ENCODE measurements at regions of chr1 and their contacts with region 1.

Region 1: DNA sequence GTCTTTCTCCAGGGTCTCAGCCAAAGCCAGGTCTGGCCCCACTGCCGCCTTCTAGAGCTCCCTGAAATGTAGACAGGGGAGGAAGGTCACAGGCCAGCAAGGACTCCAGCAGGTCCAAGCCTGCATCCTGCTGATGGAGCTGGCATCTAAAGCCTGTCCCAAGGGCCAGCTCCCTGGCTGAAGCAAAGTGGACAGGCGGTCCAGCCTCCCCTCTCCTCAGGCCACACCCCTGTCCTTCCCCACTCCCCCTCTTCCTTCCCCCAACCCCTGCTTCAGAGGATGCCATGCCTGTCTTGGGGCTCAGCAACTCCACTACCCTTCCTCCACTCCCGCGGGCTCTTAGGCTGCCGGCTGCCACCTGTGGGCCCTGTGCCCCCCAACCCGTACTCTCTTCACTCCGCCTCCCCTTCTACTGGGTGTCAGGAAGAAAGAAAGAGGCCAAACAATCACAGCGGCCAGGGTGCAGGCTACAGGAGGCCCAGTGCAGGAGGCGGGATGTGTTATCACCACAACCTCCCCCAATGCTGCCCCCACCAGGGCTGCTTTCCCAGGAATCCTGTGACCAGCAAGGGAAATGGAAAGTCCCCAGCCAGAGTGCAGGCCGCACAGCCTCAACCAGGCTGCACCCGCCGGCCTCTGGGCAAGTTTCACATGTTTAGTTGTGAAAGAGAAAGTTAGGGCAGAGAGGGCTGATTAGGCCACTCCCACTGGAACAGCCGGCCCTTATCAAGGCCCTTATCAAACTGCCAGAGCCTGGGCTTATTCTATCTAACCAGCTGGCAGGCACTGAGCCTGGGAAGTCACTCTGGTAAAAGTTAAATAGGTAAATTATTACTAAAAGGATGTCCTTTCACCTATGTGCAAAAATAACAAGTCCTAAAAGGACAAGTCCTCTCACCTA is 34.1 kb downstream of the ACOT7 start:
- DNase-seq: peak; percentile 51 to 75 (median 66)
- ATAC-seq: peak; percentile 29 to 83 (median 71)
- H3K4me3 ChIP-seq: peak overlapping the region in 4 of 12 donors; percentile 4 to 26 (median 13)
- H3K27ac ChIP-seq: peak overlapping the region; percentile 52 to 89 (median 76)
- H3K4me1 ChIP-seq: peaks cover 6 to 36% (median 30%) of the 10 kb centered on the region in 12 donors
- H3K27me3 ChIP-seq: no peaks in the 10 kb centered on the region
- CTCF ChIP-seq: no peak
- POLR2A ChIP-seq: no peak

Region 2: DNA sequence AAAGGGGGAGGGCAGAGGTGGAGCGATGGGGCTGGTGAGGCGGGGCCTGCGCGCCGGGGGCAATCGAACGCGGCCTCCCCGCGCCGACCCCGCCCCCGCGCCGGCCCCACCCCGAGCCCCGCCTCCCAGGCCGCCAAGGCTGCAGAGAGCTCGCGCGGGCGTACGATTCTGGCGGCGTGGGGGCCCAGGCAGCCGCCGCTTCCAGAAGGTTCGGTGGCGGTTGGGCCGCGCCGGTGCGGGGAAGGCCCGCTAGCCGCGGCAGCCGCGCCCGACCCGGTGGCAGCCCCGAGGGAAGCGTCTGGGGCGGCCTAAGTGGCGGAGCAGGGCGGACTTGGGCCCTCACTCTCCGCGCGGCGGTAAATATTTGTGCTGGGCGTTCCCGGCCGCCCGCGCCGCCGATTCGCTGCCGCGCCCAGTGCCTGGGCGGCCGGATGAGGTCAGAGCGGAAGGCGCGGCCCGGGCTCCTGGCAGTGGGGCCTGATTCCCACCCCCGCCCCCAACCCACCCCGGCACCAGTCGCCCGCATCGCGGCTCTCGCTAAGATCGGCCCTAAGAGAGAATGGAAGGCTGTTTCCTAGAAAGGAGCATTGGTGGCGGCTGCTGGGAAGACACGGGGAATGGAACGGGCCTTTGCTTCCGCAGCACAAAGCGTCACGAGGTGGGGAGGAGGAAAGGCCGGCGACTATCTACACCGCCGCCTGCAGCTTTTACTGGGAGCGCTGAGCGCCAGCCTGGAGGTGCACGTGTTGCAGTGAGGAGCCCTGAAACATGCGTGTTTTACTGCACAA is 34.1 kb after region 1 on chr1 and contains the start of gene ACOT7:
- intact Hi-C with region 1: loop called in 1 of 10 experiments (anchors 5 kb)
- DNase-seq: peak; percentile 90 to 92 (median 91)
- ATAC-seq: peak; percentile 86 to 99 (median 96)
- H3K4me3 ChIP-seq: peak within 1 kb of the TSS; percentile 20 to 83 (median 72)
- H3K27ac ChIP-seq: peak within 1 kb of the TSS; percentile 88 to 99 (median 98)
- H3K4me1 ChIP-seq: peaks cover 0 to 18% (median 13%) of the 10 kb centered on the region in 12 donors
- H3K27me3 ChIP-seq: no peaks in the 10 kb centered on the region
- CTCF ChIP-seq: peak in 8 of 12 donors; percentile 8 to 47 (median 36)
- POLR2A ChIP-seq: peak in 1 of 2 donors; percentile 74
- total RNA-seq, gene ACOT7: 5.7 to 34.0 (median 12.6) TPM

Region 3: DNA sequence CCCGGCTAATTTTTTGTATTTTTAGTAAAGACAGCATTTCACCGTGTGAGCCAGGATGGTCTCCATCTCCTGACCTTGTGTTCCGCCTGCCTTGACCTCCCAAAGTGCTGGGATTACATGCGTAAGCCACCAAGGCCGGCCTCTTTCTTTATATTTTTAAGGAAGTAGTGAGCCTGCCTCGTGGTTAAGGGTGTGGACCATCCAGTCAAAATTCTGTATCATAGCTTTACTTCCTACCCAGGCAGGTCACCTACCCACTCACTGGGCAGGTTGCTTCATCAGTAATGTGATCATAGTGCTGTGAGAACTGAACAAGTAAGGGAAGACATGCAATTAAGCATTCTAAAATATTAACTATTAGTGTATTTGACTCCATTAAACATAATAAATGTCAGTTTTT is 42.2 kb after region 1 on chr1:
- intact Hi-C with region 1: loop called in 8 of 10 experiments (anchors 1 to 5 kb)
- DNase-seq: peak in 1 of 5 donors; percentile 7
- ATAC-seq: no peak
- H3K4me3 ChIP-seq: no peak overlapping the region
- H3K27ac ChIP-seq: no peak overlapping the region
- H3K4me1 ChIP-seq: no peaks in the 10 kb centered on the region
- H3K27me3 ChIP-seq: peaks cover 0 to 16% (median 0%) of the 10 kb centered on the region in 9 donors
- CTCF ChIP-seq: no peak
- POLR2A ChIP-seq: no peak

Region 4: DNA sequence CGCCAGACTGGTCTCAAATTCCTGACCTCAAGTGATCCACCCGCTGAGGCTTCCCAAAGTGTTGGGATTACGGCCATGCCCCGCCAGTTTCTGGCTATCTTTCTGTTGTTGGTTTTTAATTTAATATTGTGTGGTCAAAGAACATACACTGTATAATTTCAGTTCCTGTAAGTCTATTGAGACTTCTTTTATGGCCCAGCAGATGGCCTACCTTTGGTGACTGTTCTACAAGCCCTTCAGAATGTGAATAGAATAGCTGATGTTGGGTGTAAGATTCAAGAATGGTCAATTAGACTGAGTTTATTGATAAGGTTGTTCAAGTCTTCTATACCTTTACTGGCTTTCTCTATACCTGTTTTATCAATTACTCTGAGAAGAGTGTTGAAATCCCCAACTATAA is 49.6 kb after region 1 on chr1:
- intact Hi-C with region 1: loop called in 9 of 10 experiments (anchors 1 to 5 kb)
- DNase-seq: peak in 1 of 5 donors; percentile 4
- ATAC-seq: no peak
- H3K4me3 ChIP-seq: no peak overlapping the region
- H3K27ac ChIP-seq: no peak overlapping the region
- H3K4me1 ChIP-seq: no peaks in the 10 kb centered on the region
- H3K27me3 ChIP-seq: peaks cover 0 to 38% (median 7%) of the 10 kb centered on the region in 9 donors
- CTCF ChIP-seq: no peak
- POLR2A ChIP-seq: no peak

Region 5: GRCh38 chr1:6438047-6438525 is 78.6 kb after region 1 on chr1:
- intact Hi-C with region 1: loop called in 1 of 10 experiments (anchors 5 kb)
- DNase-seq: peak in 2 of 5 donors; percentile 51 to 56
- ATAC-seq: peak; percentile 60 to 78 (median 69)
- H3K4me3 ChIP-seq: no peak overlapping the region
- H3K27ac ChIP-seq: no peak overlapping the region
- H3K4me1 ChIP-seq: peaks cover 0 to 9% (median 0%) of the 10 kb centered on the region in 12 donors
- H3K27me3 ChIP-seq: peaks cover 10 to 53% (median 31%) of the 10 kb centered on the region in 9 donors
- CTCF ChIP-seq: peak; percentile 88 to 96 (median 94)
- POLR2A ChIP-seq: no peak

Measured in heart left ventricle (tissue), 16 donors.